ENCODE measurements at regions of chr10 and their contacts with region 1.

Region 1: GRCh38 chr10:30591249-30591670 is 38.3 kb downstream of the LYZL2 start:
- DNase-seq: peak; percentile 49 to 57
- H3K4me3 ChIP-seq: no peak overlapping the region
- H3K4me1 ChIP-seq: peaks cover 3% of the 10 kb centered on the region; the same call in 1 of the 2 replicates
- H3K27me3 ChIP-seq: no peaks in the 10 kb centered on the region

Region 2: DNA sequence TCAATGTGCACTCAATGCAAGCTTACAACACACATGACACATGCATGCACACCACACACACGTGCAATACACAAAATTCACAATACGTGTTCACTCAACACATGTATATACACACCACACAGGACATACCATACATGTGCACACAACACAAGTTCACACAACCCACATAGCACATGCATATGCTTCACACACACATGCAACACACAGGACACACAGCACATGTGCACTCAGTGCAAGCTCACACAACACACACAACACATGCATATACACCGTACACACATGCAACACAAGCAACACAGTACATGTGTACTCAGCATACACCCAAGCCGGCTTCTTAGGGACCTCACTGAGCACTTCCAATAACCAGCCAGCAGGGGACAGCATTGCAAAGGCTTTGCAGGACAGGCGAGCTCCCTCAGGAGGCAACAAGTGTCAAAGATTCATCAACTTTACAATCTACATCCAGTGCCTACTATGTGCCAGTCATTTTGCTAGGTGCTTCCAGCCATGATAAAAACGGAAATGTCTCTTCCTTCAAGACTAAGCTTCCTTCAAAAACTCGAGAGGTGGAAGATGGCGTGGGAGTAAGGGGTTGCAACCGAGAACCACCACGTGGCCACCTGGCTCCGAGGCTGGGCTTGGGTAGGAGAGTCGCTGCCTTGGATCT is 593.0 kb before region 1 on chr10:
- in situ Hi-C with region 1: loop called (anchors 25 kb)
- DNase-seq: peak; percentile 52 to 85
- H3K4me3 ChIP-seq: no peak overlapping the region
- H3K4me1 ChIP-seq: no peaks in the 10 kb centered on the region
- H3K27me3 ChIP-seq: no peaks in the 10 kb centered on the region

Region 3: GRCh38 chr10:30170824-30171223 is 420.4 kb before region 1 on chr10:
- in situ Hi-C with region 1: no loop called
- DNase-seq: no peak
- H3K4me3 ChIP-seq: no peak overlapping the region
- H3K4me1 ChIP-seq: no peaks in the 10 kb centered on the region
- H3K27me3 ChIP-seq: no peaks in the 10 kb centered on the region

Region 4: DNA sequence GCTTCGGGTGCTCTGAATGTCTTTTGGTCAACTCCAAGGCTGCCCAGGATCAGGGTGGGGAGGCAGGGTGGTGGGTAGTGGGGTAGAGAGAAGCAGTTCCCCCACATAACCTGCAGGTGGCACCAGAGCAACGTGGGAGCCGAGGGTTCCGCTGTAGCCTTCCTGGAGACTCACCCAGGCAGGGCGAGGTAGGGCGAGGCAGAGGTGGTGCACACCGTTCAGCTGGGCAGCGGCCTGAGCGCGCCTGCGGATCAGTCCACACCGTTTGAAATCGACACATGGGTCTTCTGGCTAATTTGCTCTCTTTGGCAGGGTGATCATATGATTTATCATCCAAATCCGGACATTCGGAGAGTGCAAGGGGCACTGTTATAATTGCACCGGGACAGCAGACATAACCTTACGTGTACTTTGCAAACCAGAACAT is 198.7 kb before region 1 on chr10:
- in situ Hi-C with region 1: loop called (anchors 5 kb)
- DNase-seq: peak; percentile 60 to 89
- H3K4me3 ChIP-seq: no peak overlapping the region
- H3K4me1 ChIP-seq: no peaks in the 10 kb centered on the region
- H3K27me3 ChIP-seq: no peaks in the 10 kb centered on the region

Region 5: GRCh38 chr10:30722956-30723620 is 131.8 kb after region 1 on chr10:
- in situ Hi-C with region 1: no loop called
- DNase-seq: peak; percentile 19 to 73
- H3K4me3 ChIP-seq: no peak overlapping the region
- H3K4me1 ChIP-seq: peaks cover 7% of the 10 kb centered on the region
- H3K27me3 ChIP-seq: no peaks in the 10 kb centered on the region

Measured in HAP-1 (cell line).